ENCODE measurements at regions of chr2 and their contacts with region 1.

Region 1: DNA sequence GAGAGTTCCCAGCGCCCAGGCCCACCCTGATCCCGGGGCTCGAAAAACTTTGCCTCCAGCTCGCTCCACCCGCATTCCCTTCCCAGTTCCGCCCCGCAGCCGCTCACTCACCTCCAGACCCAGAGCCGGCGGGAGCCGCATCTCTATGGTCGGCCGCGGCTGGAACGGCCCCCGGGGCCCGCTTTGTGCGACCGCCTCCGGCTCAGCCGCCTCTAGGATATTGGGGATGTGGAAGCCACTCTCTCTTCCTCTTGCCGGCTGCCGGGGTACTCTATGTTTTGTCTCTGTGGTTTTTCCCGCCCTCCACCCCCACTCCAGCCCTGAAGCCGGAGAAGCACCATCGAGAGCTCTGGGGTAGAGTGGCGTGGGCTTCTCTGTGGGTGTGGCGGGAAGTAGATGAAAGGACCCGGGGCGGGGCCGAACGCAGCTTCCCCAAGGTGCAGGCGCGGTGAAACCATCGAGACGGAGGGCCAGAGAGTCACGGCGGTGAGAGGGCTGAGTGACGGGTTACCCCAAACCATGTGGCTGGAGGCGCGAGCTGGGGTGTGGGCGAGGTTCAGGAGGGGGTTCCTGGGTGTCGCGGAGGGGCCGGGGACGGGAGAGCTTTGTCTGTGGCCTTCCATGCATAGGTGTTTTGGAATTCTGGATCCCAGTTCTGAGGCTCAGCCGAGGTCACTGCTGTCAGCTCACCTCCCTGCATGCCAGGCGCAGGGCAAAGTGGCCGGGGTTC is at the starts of genes BCS1L and ZNF142:
- DNase-seq: peak; percentile 94
- H3K4me3 ChIP-seq: peak within 1 kb of the TSS; percentile 80
- H3K4me3 Mint-ChIP-seq: peak within 1 kb of the TSS; percentile 95
- H3K27ac Mint-ChIP-seq: peak within 1 kb of the TSS; percentile 85
- H3K4me1 ChIP-seq: peaks cover 6% of the 10 kb centered on the region; the same call in 1 of the 2 replicates
- H3K4me1 Mint-ChIP-seq: peaks cover 9% of the 10 kb centered on the region
- H3K27me3 ChIP-seq: no peaks in the 10 kb centered on the region
- H3K27me3 Mint-ChIP-seq: no peaks in the 10 kb centered on the region
- CTCF ChIP-seq: no peak
- total RNA-seq, gene BCS1L: 68.3 and 74.6 TPM in 2 replicates
- total RNA-seq, gene ZNF142: 37.0 and 38.5 TPM in 2 replicates

Region 2: DNA sequence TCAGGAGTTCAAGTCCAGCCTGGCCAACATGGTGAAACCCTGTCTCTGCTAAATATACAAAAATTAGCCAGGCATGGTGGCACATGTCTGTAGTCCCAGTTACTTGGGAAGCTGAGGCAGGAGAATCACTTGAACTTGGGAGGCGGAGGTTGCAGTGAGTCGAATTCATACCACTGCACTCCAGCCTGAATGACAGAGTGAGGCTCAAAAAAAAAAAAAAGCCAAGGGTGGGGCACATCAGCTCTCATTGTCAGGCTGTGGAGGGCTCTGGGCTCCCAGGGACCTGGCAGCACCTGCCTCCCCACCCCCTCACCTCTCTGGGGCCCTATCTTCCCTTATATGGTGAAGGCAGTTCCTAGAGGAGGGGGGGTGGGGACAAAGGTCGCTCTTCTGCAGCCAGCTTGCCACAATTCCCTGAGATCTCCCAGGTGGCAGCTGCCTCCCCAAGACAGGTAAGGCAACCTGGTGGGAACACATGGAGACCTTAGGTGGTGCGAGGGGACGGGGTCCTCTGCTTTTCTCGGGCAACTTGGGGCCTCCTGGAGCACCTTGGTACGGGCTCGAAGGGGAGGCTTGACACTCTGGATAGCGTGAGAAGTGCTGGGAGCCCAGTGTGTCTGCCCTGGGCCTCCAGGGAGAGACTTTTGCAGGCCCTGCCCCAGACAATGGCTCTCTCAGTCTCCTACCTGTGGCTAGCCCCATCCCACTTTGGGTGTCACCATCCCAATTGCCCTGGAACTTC is 240.5 kb before region 1 on chr2 and contains the start of gene VIL1:
- CTCF ChIA-PET with region 1: no interaction called
- POLR2A ChIA-PET with region 1: interaction called, 12 read pairs
- intact Hi-C with region 1: no loop called
- DNase-seq: peak; percentile 95 to 98
- H3K4me3 ChIP-seq: peak within 1 kb of the TSS; percentile 93
- H3K4me3 Mint-ChIP-seq: peak within 1 kb of the TSS; percentile 90
- H3K27ac Mint-ChIP-seq: peak within 1 kb of the TSS; percentile 88
- H3K4me1 ChIP-seq: peaks cover 42% of the 10 kb centered on the region
- H3K4me1 Mint-ChIP-seq: peaks cover 33% of the 10 kb centered on the region
- H3K27me3 ChIP-seq: no peaks in the 10 kb centered on the region
- H3K27me3 Mint-ChIP-seq: no peaks in the 10 kb centered on the region
- CTCF ChIP-seq: no peak
- total RNA-seq, gene VIL1: 401 and 448 TPM in 2 replicates

Region 3: GRCh38 chr2:218568190-218569037 is 91.0 kb before region 1 on chr2 and contains the starts of genes CNOT9 and USP37:
- CTCF ChIA-PET with region 1: no interaction called
- POLR2A ChIA-PET with region 1: no interaction called
- intact Hi-C with region 1: loop called (anchors 1 kb)
- DNase-seq: peak; percentile 99 to 100
- H3K4me3 ChIP-seq: peak within 1 kb of the TSS; percentile 64
- H3K4me3 Mint-ChIP-seq: peak within 1 kb of the TSS; percentile 86
- H3K27ac Mint-ChIP-seq: peak within 1 kb of the TSS; percentile 86
- H3K4me1 ChIP-seq: peaks cover 15% of the 10 kb centered on the region
- H3K4me1 Mint-ChIP-seq: peaks cover 36% of the 10 kb centered on the region
- H3K27me3 ChIP-seq: no peaks in the 10 kb centered on the region
- H3K27me3 Mint-ChIP-seq: no peaks in the 10 kb centered on the region
- CTCF ChIP-seq: no peak
- total RNA-seq, gene CNOT9: 56.4 and 59.9 TPM in 2 replicates
- total RNA-seq, gene USP37: 18.6 and 22.2 TPM in 2 replicates

Region 4: DNA sequence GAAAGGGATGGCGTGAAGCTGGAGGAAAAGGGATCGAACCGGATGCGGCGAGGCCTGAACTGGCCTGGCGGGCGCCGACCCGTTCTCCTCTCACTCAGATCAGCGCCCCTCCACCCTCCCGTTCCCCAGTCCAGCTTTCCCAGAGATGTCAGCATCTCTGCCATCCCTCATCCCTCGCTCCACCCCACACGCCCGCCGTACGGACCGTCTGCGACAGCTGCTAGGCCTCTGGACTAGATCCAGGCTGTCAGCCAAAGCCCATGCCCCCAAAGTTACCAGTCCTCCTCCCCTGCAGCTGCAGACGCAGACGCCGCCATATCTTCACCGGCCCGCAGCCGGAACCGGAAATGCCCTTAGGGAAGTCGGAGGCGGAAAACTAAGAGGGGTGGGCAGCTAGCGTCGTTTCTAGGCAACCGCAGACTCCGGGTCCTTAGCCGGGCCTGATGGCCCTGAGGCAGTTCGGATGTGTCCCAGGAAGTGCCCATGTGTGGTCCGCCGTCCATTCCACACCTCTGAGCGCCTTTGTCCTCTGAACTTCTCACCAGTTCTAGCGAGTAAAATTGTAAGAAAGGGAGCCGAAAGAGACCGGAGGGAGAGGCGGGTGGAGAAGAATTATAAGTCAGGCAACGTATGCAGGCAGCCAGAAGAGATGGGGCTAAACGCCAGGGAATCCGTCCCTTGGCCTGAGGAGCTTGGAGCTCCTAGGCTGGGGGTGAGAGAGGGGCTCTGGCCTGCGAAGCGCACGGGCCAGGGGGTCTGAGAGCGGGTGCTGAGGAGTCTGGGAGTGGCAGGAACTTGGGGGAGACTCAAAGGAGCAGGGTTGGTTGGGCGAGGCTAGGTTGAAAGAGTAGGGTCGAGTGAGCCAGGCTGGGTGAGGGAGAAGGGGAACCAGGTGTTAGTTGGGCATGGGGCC is 12.5 kb after region 1 on chr2 and contains the starts of genes RNF25 and STK36:
- CTCF ChIA-PET with region 1: interaction called, 20 read pairs
- POLR2A ChIA-PET with region 1: interaction called, 43 read pairs
- intact Hi-C with region 1: loop called (anchors 1 kb)
- DNase-seq: peak; percentile 86 to 88
- H3K4me3 ChIP-seq: peak within 1 kb of the TSS; percentile 86
- H3K4me3 Mint-ChIP-seq: peak within 1 kb of the TSS; percentile 96
- H3K27ac Mint-ChIP-seq: peak within 1 kb of the TSS; percentile 91
- H3K4me1 ChIP-seq: peaks cover 11% of the 10 kb centered on the region; the same call in 1 of the 2 replicates
- H3K4me1 Mint-ChIP-seq: peaks cover 11% of the 10 kb centered on the region
- H3K27me3 ChIP-seq: no peaks in the 10 kb centered on the region
- H3K27me3 Mint-ChIP-seq: no peaks in the 10 kb centered on the region
- CTCF ChIP-seq: no peak
- total RNA-seq, gene RNF25: 30.5 and 32.1 TPM in 2 replicates
- total RNA-seq, gene STK36: 44.1 and 56.9 TPM in 2 replicates

Region 5: GRCh38 chr2:218691234-218691633 is 31.8 kb after region 1 on chr2:
- CTCF ChIA-PET with region 1: interaction called, 42 read pairs
- POLR2A ChIA-PET with region 1: interaction called, 5 read pairs
- intact Hi-C with region 1: loop called (anchors 1 kb)
- DNase-seq: no peak
- H3K4me3 ChIP-seq: no peak overlapping the region
- H3K4me3 Mint-ChIP-seq: no peak overlapping the region
- H3K27ac Mint-ChIP-seq: no peak overlapping the region
- H3K4me1 ChIP-seq: no peaks in the 10 kb centered on the region
- H3K4me1 Mint-ChIP-seq: peaks cover 6% of the 10 kb centered on the region
- H3K27me3 ChIP-seq: no peaks in the 10 kb centered on the region
- H3K27me3 Mint-ChIP-seq: no peaks in the 10 kb centered on the region
- CTCF ChIP-seq: no peak

Region 6: GRCh38 chr2:218701806-218702205 is 42.4 kb after region 1 on chr2:
- CTCF ChIA-PET with region 1: no interaction called
- POLR2A ChIA-PET with region 1: no interaction called
- intact Hi-C with region 1: no loop called
- DNase-seq: no peak
- H3K4me3 ChIP-seq: no peak overlapping the region
- H3K4me3 Mint-ChIP-seq: no peak overlapping the region
- H3K27ac Mint-ChIP-seq: no peak overlapping the region
- H3K4me1 ChIP-seq: peaks cover 9% of the 10 kb centered on the region; the same call in 1 of the 2 replicates
- H3K4me1 Mint-ChIP-seq: peaks cover 9% of the 10 kb centered on the region
- H3K27me3 ChIP-seq: no peaks in the 10 kb centered on the region
- H3K27me3 Mint-ChIP-seq: no peaks in the 10 kb centered on the region
- CTCF ChIP-seq: no peak